Aorta (tissue), 5 donors: ENCODE measurements at regions of chr5 and their contacts with region 1.

Region 1: DNA sequence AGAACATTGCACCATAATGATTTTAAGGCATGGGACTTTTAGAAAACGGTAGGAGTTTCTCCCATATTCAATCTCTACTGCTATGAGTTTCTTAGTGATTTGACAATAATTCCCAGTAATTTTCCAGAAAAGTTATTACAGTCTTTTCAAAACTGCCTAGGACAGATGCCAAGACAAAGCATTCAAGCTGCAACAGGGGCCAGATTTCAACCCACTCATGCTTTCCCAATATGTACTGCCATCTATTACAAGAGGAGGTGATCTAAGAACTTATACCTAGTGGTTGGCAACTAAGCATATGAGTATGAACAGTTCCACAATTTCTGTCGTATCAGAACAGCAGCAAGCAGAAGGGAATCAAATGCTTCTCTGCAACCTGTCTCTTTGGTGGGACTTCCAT is 95.1 kb upstream of the TMED7 start:
- DNase-seq: no peak
- ATAC-seq: no peak
- H3K4me3 ChIP-seq: no peak overlapping the region
- H3K27ac ChIP-seq: peak overlapping the region in 1 of 2 donors; percentile 81
- H3K4me1 ChIP-seq: peaks cover 2 to 8% of the 10 kb centered on the region in 2 donors
- H3K27me3 ChIP-seq: no peaks in the 10 kb centered on the region

Region 2: GRCh38 chr5:115816226-115817081 is 95.6 kb after region 1 on chr5 and contains the start of gene CDO1:
- intact Hi-C with region 1: loop called in 1 of 2 experiments (anchors 10 kb)
- DNase-seq: peak; percentile 77 to 88
- ATAC-seq: peak; percentile 91
- H3K4me3 ChIP-seq: peak within 1 kb of the TSS; percentile 16 to 65
- H3K27ac ChIP-seq: peak within 1 kb of the TSS; percentile 62 to 80
- H3K4me1 ChIP-seq: peaks cover 0 to 6% of the 10 kb centered on the region in 2 donors
- H3K27me3 ChIP-seq: no peaks in the 10 kb centered on the region
- total RNA-seq, gene CDO1: 11.6 to 27.7 TPM